KBM-7 (cell line): ENCODE measurements at regions of chrX and their contacts with region 1.

Region 1: GRCh38 chrX:149962859-149963757 is 24.8 kb upstream of the EOLA2 start:
- DNase-seq: peak; percentile 55

Region 2: GRCh38 chrX:150693775-150694574 is 730.9 kb after region 1 on chrX:
- in situ Hi-C with region 1: loop called (anchors 25 kb)
- DNase-seq: peak; percentile 62